PC-9 (cell line): ENCODE measurements at regions of chr22 and their contacts with region 1.

Region 1: DNA sequence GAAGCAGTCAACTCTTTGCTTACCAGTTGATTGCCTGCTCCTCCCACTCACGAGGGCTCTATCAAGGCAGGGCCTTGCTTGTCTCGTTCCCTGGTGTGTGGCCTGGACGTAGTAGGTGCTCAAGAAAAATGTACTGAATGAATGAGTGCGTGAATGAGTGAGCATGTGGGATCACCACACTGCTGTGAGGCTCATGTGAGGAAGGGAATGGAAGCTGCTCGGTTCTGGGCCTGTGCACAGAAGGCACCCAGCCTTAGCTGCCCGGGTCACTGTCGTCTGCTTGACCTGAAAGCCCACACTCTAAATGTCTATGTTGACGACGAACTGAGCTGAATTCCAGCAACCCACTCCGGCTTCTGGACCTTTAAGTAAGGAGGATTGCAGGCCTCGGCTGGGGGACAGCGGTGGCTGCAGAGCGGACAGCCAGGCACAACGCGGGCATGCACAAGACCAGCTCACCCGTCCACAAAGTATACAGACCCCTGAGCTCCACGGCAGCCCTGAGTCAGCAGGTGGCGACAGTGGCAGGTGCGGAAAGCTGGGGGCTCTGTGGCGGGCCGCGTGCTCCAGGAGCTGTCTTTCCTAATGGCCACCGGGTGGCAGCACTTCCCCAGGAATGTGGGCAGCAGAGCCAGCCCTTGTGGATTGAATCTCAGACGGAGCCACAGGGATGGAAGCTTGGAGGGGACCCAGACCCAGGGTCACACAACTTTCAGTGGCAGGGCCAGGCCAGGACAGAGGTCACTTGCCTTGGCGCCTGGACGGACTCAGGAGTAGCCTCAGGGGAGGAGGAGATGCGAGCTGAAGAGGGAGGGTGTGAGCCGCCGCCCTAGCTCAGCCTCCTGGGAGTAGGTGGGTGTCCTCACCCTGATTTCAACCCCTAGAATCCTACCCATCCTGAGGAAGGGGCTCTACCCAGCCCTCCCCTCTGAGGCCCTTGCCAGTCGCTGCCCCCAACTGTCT is 5.0 kb upstream of the PICK1 start:
- DNase-seq: peak; percentile 70 to 85
- H3K4me3 ChIP-seq: no peak overlapping the region
- H3K27ac ChIP-seq: no peak overlapping the region
- H3K4me1 ChIP-seq: no peaks in the 10 kb centered on the region
- H3K27me3 ChIP-seq: no peaks in the 10 kb centered on the region
- CTCF ChIP-seq: peak; percentile 97

Region 2: GRCh38 chr22:37538590-37539357 is 513.4 kb before region 1 on chr22:
- CTCF ChIA-PET with region 1: interaction called, 10 read pairs
- POLR2A ChIA-PET with region 1: no interaction called
- intact Hi-C with region 1: no loop called
- DNase-seq: peak; percentile 92 to 95
- H3K4me3 ChIP-seq: no peak overlapping the region
- H3K27ac ChIP-seq: peak overlapping the region; percentile 46
- H3K4me1 ChIP-seq: peaks cover 60% of the 10 kb centered on the region
- H3K27me3 ChIP-seq: no peaks in the 10 kb centered on the region
- CTCF ChIP-seq: peak; percentile 99

Region 3: GRCh38 chr22:38181453-38182247 is 129.5 kb after region 1 on chr22 and contains the start of gene PLA2G6:
- CTCF ChIA-PET with region 1: no interaction called
- POLR2A ChIA-PET with region 1: no interaction called
- intact Hi-C with region 1: no loop called
- DNase-seq: peak; percentile 99 to 100
- H3K4me3 ChIP-seq: peak within 1 kb of the TSS; percentile 66
- H3K27ac ChIP-seq: peak within 1 kb of the TSS; percentile 98
- H3K4me1 ChIP-seq: peaks cover 78% of the 10 kb centered on the region
- H3K27me3 ChIP-seq: no peaks in the 10 kb centered on the region
- CTCF ChIP-seq: no peak
- total RNA-seq, gene PLA2G6: 39.8 and 45.6 TPM in 2 replicates

Region 4: GRCh38 chr22:38201710-38202436 is 149.7 kb after region 1 on chr22 and contains the start of gene MAFF:
- CTCF ChIA-PET with region 1: interaction called, 8 read pairs
- POLR2A ChIA-PET with region 1: no interaction called
- intact Hi-C with region 1: loop called (anchors 10 kb)
- DNase-seq: peak; percentile 95 to 97
- H3K4me3 ChIP-seq: peak within 1 kb of the TSS; percentile 93
- H3K27ac ChIP-seq: peak within 1 kb of the TSS; percentile 91
- H3K4me1 ChIP-seq: peaks cover 14% of the 10 kb centered on the region
- H3K27me3 ChIP-seq: no peaks in the 10 kb centered on the region
- CTCF ChIP-seq: no peak
- total RNA-seq, gene MAFF: 27.9 and 41.8 TPM in 2 replicates

Region 5: GRCh38 chr22:38506118-38506962 is 454.2 kb after region 1 on chr22 and contains the start of gene DDX17:
- CTCF ChIA-PET with region 1: no interaction called
- POLR2A ChIA-PET with region 1: no interaction called
- intact Hi-C with region 1: loop called (anchors 10 kb)
- DNase-seq: peak; percentile 93 to 97
- H3K4me3 ChIP-seq: peak within 1 kb of the TSS; percentile 99
- H3K27ac ChIP-seq: peak within 1 kb of the TSS; percentile 96
- H3K4me1 ChIP-seq: peaks cover 32% of the 10 kb centered on the region
- H3K27me3 ChIP-seq: no peaks in the 10 kb centered on the region
- CTCF ChIP-seq: 0 out of 2 replicates have a peak, but pooled peaks have one; percentile 13
- total RNA-seq, gene DDX17: 511 and 648 TPM in 2 replicates

Region 6: GRCh38 chr22:38681784-38682335 is 629.7 kb after region 1 on chr22 and contains the start of gene TOMM22:
- CTCF ChIA-PET with region 1: interaction called, 11 read pairs
- POLR2A ChIA-PET with region 1: no interaction called
- intact Hi-C with region 1: loop called (anchors 1 kb)
- DNase-seq: peak; percentile 79 to 91
- H3K4me3 ChIP-seq: peak within 1 kb of the TSS; percentile 88
- H3K27ac ChIP-seq: peak within 1 kb of the TSS; percentile 40
- H3K4me1 ChIP-seq: peaks cover 4% of the 10 kb centered on the region; the same call in 1 of the 2 replicates
- H3K27me3 ChIP-seq: no peaks in the 10 kb centered on the region
- CTCF ChIP-seq: peak; percentile 61; the same call in 1 of the 2 replicates
- total RNA-seq, gene TOMM22: 106 and 120 TPM in 2 replicates

Region 7: GRCh38 chr22:38755911-38756532 is 703.8 kb after region 1 on chr22 and contains the start of gene SUN2:
- CTCF ChIA-PET with region 1: no interaction called
- POLR2A ChIA-PET with region 1: no interaction called
- intact Hi-C with region 1: loop called (anchors 10 kb)
- DNase-seq: peak; percentile 71 to 90
- H3K4me3 ChIP-seq: peak within 1 kb of the TSS; percentile 89
- H3K27ac ChIP-seq: peak within 1 kb of the TSS; percentile 87
- H3K4me1 ChIP-seq: peaks cover 55% of the 10 kb centered on the region
- H3K27me3 ChIP-seq: no peaks in the 10 kb centered on the region
- CTCF ChIP-seq: no peak
- total RNA-seq, gene SUN2: 169 and 220 TPM in 2 replicates

Region 8: DNA sequence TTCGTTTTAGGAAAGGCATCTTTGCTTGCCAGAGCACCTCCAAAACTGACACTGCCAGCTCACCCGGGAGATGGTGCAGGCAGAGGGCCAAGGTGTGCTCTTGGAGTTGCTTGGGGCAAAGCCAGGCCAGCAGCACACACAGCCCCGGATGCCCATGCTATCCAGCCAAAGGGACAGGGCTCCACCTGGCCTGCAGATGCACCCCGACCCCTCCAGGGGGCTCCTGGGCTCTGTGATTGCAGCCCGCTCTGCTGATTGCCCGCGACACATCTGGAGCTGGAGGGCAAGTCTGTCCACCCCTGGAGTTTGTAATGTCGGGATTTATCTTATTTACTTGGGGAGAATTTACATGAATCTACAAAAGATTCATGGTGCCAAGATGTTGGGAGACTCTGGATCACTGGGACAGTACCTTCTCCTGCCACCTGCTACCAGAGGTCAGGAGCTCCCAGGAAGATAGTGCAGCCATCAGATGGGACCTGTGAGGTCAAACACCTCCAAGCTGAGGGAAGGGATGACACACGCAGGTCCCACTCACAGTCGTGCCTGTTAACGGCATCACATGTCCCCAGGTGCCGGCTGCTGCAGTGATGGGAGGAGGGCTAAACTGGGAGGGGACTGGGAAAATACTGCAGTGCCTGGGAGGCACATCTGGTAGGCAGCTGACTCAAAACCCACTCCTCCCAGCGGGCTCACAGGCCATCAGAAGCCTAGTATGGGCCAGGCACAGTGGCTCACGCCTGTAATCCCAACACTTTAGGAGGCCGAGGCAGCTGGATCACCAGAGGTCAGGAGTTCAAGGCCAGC is 1083.1 kb after region 1 on chr22:
- CTCF ChIA-PET with region 1: no interaction called
- POLR2A ChIA-PET with region 1: no interaction called
- intact Hi-C with region 1: loop called (anchors 10 kb)
- DNase-seq: peak in 1 of 2 experiments; percentile 71
- H3K4me3 ChIP-seq: no peak overlapping the region
- H3K27ac ChIP-seq: no peak overlapping the region
- H3K4me1 ChIP-seq: peaks cover 7% of the 10 kb centered on the region
- H3K27me3 ChIP-seq: no peaks in the 10 kb centered on the region
- CTCF ChIP-seq: peak; percentile 78